WTC11 (cell line): ENCODE measurements at regions of chr19 and their contacts with region 1.

Region 1: GRCh38 chr19:17725422-17726078 is 6.3 kb downstream of the MAP1S start:
- DNase-seq: peak; percentile 77
- ATAC-seq: peak; percentile 91
- H3K4me3 Mint-ChIP-seq: no peak overlapping the region
- H3K27ac Mint-ChIP-seq: peak overlapping the region; percentile 33; the same call in 1 of the 2 replicates
- H3K4me1 Mint-ChIP-seq: peaks cover 11% of the 10 kb centered on the region
- H3K27me3 Mint-ChIP-seq: no peaks in the 10 kb centered on the region
- CTCF ChIP-seq: peak; percentile 76

Region 2: GRCh38 chr19:17576759-17577473 is 148.6 kb before region 1 on chr19:
- CTCF ChIA-PET with region 1: no interaction called
- POLR2A ChIA-PET with region 1: no interaction called
- DNase-seq: peak; percentile 100
- ATAC-seq: peak; percentile 92
- H3K4me3 Mint-ChIP-seq: peak overlapping the region; percentile 60
- H3K27ac Mint-ChIP-seq: no peak overlapping the region
- H3K4me1 Mint-ChIP-seq: peaks cover 25% of the 10 kb centered on the region
- H3K27me3 Mint-ChIP-seq: no peaks in the 10 kb centered on the region
- CTCF ChIP-seq: no peak

Region 3: GRCh38 chr19:17739121-17739875 is 13.7 kb after region 1 on chr19:
- CTCF ChIA-PET with region 1: interaction called, 16 read pairs
- POLR2A ChIA-PET with region 1: no interaction called
- DNase-seq: no peak
- ATAC-seq: peak; percentile 55
- H3K4me3 Mint-ChIP-seq: no peak overlapping the region
- H3K27ac Mint-ChIP-seq: no peak overlapping the region
- H3K4me1 Mint-ChIP-seq: peaks cover 5% of the 10 kb centered on the region; the same call in 1 of the 2 replicates
- H3K27me3 Mint-ChIP-seq: peaks cover 4% of the 10 kb centered on the region; the same call in 1 of the 2 replicates
- CTCF ChIP-seq: no peak

Region 4: GRCh38 chr19:17747205-17748098 is 21.9 kb after region 1 on chr19:
- CTCF ChIA-PET with region 1: interaction called, 11 read pairs
- POLR2A ChIA-PET with region 1: no interaction called
- DNase-seq: peak; percentile 94
- ATAC-seq: peak; percentile 99
- H3K4me3 Mint-ChIP-seq: peak overlapping the region; percentile 66
- H3K27ac Mint-ChIP-seq: no peak overlapping the region
- H3K4me1 Mint-ChIP-seq: peaks cover 9% of the 10 kb centered on the region
- H3K27me3 Mint-ChIP-seq: peaks cover 12% of the 10 kb centered on the region
- CTCF ChIP-seq: no peak